Panc1 (cell line): ENCODE measurements at regions of chr2 and their contacts with region 1.

Region 1: DNA sequence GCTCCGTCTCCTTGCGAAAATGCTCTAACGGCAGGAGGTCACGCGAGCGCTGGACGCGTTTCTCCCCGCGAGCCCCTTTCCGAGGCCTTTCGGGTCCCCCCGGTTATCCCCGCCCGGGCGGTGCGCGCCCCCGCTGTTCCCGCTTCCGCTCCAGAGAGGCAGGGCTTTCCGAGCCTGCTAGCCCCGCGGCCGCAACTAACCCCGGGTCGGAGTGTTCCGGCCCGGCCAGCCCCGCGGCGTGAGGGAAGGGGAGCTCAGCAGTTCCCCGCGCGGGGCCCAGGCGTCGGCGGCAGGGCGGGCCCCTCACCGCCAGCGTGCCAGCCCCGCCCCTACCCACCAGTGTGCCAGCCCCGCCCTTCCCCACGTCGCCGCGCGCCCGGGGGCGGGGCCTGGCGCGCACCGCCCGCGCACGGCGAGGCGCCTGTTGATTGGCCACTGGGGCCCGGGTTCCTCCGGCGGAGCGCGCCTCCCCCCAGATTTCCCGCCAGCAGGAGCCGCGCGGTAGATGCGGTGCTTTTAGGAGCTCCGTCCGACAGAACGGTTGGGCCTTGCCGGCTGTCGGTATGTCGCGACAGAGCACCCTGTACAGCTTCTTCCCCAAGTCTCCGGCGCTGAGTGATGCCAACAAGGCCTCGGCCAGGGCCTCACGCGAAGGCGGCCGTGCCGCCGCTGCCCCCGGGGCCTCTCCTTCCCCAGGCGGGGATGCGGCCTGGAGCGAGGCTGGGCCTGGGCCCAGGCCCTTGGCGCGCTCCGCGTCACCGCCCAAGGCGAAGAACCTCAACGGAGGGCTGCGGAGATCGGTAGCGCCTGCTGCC is at the start of gene MSH6:
- DNase-seq: no peak
- ATAC-seq: peak; percentile 89
- H3K4me3 ChIP-seq: peak within 1 kb of the TSS; percentile 75 to 77
- H3K27ac ChIP-seq: peak within 1 kb of the TSS; percentile 85
- H3K4me1 ChIP-seq: peaks cover 4% of the 10 kb centered on the region; the same call in 1 of the 2 replicates
- H3K27me3 ChIP-seq: no peaks in the 10 kb centered on the region
- CTCF ChIP-seq: no peak
- total RNA-seq, gene MSH6: 98.0 TPM

Region 2: GRCh38 chr2:46857893-46858701 is 924.8 kb before region 1 on chr2:
- CTCF ChIA-PET with region 1: no interaction called
- POLR2A ChIA-PET with region 1: interaction called, 10 read pairs
- in situ Hi-C with region 1: no loop called
- intact Hi-C with region 1: no loop called
- DNase-seq: no peak
- ATAC-seq: no peak
- H3K4me3 ChIP-seq: no peak overlapping the region
- H3K27ac ChIP-seq: no peak overlapping the region
- H3K4me1 ChIP-seq: peaks cover 5% of the 10 kb centered on the region; the same call in 1 of the 2 replicates
- H3K27me3 ChIP-seq: no peaks in the 10 kb centered on the region
- CTCF ChIP-seq: no peak

Region 3: DNA sequence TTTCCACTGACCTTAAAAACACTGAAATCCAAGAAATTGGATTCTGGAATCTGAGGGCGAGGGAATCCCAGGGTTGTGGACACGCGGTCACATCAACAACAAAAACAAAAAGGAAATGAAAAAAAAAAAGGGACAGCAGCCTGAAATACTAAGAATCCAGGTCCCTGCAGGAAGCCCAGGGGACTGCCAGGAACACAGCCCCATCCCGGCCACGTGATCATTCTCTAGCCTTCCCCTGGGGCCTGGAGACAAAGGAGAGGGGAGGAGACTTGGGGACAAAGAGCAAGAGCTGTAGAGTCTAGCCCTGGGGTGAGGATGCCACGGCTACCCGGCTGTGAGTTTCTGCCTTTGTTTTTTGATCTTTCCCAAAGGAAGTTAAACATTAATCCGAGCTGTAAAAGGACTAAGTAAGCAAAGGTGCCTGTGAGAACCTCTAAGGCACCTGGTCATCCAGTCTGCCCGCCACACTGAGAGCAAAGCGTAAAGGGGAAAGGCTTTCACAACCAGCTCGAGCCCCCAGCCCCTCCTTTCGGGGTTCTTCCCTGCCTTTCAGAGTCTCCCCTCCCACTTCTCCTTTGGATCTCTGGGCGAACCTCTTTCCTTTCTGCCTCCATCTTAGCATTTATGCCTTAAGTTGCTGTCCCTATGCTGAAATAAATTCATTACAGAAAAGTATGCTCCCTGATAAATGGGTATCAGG is 437.8 kb before region 1 on chr2:
- CTCF ChIA-PET with region 1: no interaction called
- POLR2A ChIA-PET with region 1: no interaction called
- in situ Hi-C with region 1: no loop called
- intact Hi-C with region 1: no loop called
- DNase-seq: no peak
- ATAC-seq: peak; percentile 99
- H3K4me3 ChIP-seq: peak overlapping the region; percentile 50 to 75
- H3K27ac ChIP-seq: peak overlapping the region; percentile 98
- H3K4me1 ChIP-seq: peaks cover 14% of the 10 kb centered on the region
- H3K27me3 ChIP-seq: no peaks in the 10 kb centered on the region
- CTCF ChIP-seq: no peak

Region 4: GRCh38 chr2:49278561-49278960 is 1495.7 kb after region 1 on chr2:
- CTCF ChIA-PET with region 1: no interaction called
- POLR2A ChIA-PET with region 1: interaction called, 15 read pairs
- in situ Hi-C with region 1: no loop called
- intact Hi-C with region 1: no loop called
- DNase-seq: no peak
- ATAC-seq: no peak
- H3K4me3 ChIP-seq: no peak overlapping the region
- H3K27ac ChIP-seq: no peak overlapping the region
- H3K4me1 ChIP-seq: no peaks in the 10 kb centered on the region
- H3K27me3 ChIP-seq: no peaks in the 10 kb centered on the region
- CTCF ChIP-seq: no peak